PC-3 (cell line): ENCODE measurements at regions of chr5 and their contacts with region 1.

Region 1: DNA sequence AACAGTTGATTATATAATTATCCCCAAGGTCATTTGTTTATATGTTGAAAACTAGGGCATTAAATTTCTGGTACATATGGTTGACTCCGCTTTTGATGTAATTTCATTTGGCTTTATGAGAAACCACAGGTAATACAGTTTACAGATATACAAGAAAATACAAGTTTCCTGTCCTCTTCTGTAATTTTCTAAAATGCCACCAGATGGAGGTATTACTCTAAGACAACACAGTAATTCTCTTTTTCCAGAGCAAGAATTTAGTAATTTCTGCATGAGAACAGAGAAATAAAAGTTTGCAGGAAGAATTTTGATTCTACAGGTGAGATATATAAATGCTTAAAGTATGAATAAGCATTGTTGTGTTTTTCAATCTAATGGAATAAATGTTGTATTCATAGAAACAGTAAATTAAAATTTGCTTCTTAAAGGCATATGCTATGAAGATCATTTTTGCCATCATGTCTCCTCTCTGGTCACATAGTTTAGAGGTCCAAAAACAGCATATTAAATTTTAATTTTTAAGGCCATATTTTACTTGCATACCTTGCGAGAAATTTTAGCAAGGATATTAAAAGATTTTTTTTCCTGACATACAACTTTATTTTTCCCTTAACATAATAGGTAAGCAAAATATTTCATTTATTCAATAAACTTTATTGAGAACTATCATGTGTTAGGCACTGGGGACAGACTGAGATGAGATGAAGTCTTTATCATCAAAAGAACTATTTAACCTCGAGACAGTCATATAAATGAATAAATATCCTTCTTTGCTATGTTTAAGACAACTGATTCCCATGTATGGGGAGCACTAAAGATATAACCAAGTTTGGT is 22.7 kb downstream of the CHD1 start:
- DNase-seq: peak; percentile 83
- ATAC-seq: peak; percentile 14; the same call in 1 of the 2 replicates
- H3K4me3 ChIP-seq: no peak overlapping the region
- H3K27ac ChIP-seq: peak overlapping the region; percentile 81
- H3K4me1 ChIP-seq: peaks cover 52% of the 10 kb centered on the region
- H3K27me3 ChIP-seq: no peaks in the 10 kb centered on the region
- CTCF ChIP-seq: peak; percentile 92

Region 2: DNA sequence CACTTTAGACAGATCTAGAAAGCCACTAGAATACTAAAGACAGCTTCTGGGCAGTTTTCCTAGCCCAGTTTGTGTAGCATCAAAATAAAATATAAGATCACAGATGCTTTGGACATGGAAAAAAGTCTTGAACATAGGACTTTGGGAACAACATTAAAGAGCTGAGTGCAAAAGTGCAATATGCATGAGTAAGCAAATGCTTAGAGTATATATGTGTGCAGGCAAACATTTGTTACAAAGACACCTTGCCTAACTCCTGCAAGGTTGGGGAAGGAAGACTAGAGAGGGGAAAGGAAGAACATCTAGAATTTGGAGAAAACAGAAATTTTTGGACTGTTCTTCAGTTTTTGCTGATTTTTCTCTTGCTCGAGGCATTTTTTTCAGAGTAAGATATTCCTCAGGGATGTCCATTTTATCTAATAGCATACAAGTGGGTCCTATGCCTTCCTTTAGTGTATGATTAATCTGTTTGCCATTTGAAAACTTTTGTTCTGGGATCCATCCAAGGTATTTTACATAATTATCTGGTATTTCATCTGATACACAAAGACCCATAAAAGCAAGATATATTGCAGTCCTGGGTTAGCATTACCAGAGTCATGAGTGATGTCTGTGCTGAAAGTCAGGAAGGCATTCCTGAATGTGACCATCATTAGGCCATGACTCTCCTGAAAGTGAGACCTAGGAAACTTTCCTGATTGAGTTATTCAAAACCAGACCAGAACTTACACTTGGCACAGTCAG is 274.6 kb before region 1 on chr5:
- CTCF ChIA-PET with region 1: no interaction called
- POLR2A ChIA-PET with region 1: no interaction called
- intact Hi-C with region 1: no loop called
- DNase-seq: peak; percentile 92
- ATAC-seq: peak; percentile 97
- H3K4me3 ChIP-seq: no peak overlapping the region
- H3K27ac ChIP-seq: peak overlapping the region; percentile 21
- H3K4me1 ChIP-seq: peaks cover 23% of the 10 kb centered on the region
- H3K27me3 ChIP-seq: no peaks in the 10 kb centered on the region
- CTCF ChIP-seq: no peak

Region 3: DNA sequence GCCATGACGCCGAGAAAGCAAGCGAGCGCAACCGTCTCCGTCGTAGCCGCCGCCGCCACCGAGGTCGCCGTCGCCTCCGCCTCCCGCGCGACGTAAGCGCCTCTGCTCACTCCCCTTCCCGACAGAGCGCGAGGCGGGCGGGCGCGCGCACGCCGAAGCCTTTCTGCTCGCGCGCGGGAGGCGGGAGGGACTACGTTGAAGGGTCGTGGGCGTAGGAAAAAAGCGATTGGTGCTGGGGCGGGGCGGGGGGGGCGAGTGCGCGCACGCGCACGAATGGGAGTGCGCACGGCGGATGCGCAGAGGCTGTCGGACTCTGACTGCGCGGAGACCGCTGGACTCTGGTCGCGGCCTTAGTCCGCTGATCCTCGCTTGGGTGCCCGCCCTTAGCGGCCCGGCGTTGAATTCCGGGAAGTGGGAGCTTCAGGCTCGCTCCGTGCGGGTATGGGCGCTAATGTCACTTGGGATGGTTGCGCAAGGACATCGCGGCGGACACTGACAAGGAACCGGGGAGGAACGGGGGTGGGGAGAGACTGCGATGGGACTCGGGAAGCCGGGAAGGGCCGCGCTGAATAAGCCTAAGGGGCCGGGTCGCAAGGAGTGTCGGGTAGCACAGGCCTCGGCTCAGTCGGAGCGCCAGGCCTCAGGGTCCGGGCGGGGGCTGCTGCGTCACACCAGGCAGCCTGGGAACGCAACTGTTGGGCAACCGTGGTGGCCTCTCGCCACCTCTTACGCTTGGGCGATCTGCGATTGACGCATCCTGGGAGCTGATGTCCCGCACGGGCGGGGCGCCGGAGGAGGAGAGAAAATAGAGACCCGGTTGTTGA is 23.0 kb after region 1 on chr5 and contains the start of gene CHD1:
- CTCF ChIA-PET with region 1: no interaction called
- POLR2A ChIA-PET with region 1: no interaction called
- intact Hi-C with region 1: loop called (anchors 1 kb)
- DNase-seq: peak; percentile 99
- ATAC-seq: peak; percentile 67
- H3K4me3 ChIP-seq: peak within 1 kb of the TSS; percentile 98
- H3K27ac ChIP-seq: peak within 1 kb of the TSS; percentile 99
- H3K4me1 ChIP-seq: peaks cover 21% of the 10 kb centered on the region
- H3K27me3 ChIP-seq: no peaks in the 10 kb centered on the region
- CTCF ChIP-seq: no peak
- total RNA-seq, gene CHD1: 45.9 and 52.3 TPM in 2 replicates

Region 4: DNA sequence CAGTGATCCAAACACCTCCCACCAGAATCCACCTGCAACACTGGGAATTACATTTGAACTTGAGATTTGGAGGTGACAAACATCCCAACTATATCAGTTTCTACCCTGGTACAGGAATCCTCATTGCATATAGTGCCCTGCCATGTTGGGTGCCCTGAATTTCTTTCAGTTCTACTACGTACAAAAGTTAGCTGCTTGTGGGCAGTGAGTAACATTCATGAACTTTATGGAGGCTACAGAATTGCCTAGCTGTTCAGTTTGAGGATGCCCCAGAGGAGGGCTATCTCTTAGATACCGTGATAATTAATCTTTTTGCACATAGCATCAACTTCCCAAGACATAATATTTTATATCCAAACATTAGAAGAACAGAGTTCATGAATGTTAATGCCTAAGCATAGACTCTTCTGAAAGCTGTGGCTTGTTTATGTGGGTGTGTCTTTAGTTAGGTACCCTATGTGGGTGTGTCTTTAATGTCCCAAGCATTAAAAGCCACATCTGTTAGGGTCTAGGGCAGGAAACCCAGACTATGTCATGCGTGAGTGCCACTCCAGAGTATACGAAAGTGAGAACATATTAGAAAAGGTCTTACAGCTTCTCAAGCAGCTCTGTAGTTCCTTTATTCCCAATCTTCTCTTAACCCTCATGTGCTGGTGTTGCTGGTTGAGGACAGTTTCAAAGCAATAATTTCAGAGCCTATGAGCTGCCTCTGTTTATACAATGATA is 69.8 kb after region 1 on chr5:
- CTCF ChIA-PET with region 1: no interaction called
- POLR2A ChIA-PET with region 1: no interaction called
- intact Hi-C with region 1: no loop called
- DNase-seq: no peak
- ATAC-seq: no peak
- H3K4me3 ChIP-seq: no peak overlapping the region
- H3K27ac ChIP-seq: no peak overlapping the region
- H3K4me1 ChIP-seq: peaks cover 29% of the 10 kb centered on the region
- H3K27me3 ChIP-seq: no peaks in the 10 kb centered on the region
- CTCF ChIP-seq: no peak

Region 5: DNA sequence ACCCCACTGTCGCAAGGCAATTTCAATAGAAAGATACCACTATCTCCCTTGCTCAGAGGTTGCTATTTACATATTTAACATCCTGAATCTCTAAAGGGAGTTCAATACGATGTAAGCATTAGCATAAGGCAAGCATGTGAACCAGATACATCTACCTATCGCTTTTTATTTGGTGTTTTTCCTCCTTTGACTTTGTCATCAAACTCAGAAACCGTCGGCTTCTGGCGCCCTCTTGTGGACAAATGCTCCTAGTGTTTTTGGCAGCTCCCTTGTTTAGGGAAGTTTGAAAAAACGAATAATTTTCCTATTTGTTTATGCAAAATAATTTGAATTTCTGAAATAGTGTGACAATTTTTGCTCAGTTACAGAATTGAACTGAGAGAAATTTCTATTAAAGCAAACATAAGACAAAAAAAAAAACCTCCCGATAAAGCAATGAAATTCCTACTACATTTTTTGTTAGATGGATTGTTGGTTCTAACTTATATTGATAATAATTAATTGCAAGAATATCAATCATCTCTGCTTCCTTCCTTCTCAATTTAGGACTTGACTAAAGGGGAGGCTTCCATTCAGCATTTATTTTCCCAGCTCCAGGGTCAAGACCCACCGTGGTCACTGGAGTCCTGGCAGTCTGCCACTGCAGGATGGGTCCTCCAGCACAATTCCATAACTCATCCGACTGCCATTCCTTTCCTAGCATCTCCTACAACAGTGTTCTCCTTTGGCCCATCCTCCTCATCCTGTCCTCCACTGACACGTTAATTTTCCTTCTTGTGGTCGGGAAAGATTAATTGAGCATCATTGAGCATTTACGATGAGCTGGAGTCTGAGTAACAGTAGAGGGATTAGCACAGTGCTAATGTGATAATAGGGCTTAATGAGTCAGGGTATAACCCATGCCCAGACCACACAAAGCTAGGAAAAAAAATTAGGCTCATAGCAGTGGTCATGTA is 154.5 kb after region 1 on chr5:
- CTCF ChIA-PET with region 1: interaction called, 3 read pairs
- POLR2A ChIA-PET with region 1: no interaction called
- intact Hi-C with region 1: loop called (anchors 1 kb)
- DNase-seq: peak; percentile 94
- ATAC-seq: peak; percentile 50
- H3K4me3 ChIP-seq: no peak overlapping the region
- H3K27ac ChIP-seq: no peak overlapping the region
- H3K4me1 ChIP-seq: peaks cover 20% of the 10 kb centered on the region
- H3K27me3 ChIP-seq: no peaks in the 10 kb centered on the region
- CTCF ChIP-seq: peak; percentile 99

Region 6: DNA sequence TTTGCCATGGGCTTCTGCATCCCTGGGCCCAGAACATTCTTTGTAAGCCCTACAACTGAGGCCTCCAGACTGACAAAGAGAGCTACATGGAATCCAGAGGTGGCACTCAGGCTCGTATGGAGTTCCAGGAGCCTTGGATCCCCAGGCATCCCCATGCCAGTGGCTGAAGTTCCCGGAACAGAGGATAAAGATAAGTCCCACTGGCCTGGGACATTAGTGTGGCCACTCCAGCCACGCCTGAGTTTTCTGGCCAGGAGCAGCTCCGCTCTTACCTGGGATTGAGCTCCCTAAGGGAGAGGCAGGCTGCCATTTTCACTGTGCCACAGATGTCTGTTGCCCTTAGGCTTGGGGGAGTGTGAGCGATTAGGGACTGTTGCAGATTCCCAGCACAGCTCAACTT is 972.8 kb after region 1 on chr5:
- CTCF ChIA-PET with region 1: no interaction called
- POLR2A ChIA-PET with region 1: no interaction called
- intact Hi-C with region 1: no loop called
- DNase-seq: no peak
- ATAC-seq: no peak
- H3K4me3 ChIP-seq: no peak overlapping the region
- H3K27ac ChIP-seq: no peak overlapping the region
- H3K4me1 ChIP-seq: no peaks in the 10 kb centered on the region
- H3K27me3 ChIP-seq: no peaks in the 10 kb centered on the region
- CTCF ChIP-seq: no peak